HepG2 (cell line): ENCODE measurements at regions of chr10 and their contacts with region 1.

Region 1: GRCh38 chr10:61869774-61870525 is 31.5 kb upstream of the ARID5B start:
- DNase-seq: no peak
- ATAC-seq: no peak
- H3K4me3 ChIP-seq: no peak overlapping the region
- H3K27ac ChIP-seq: no peak overlapping the region
- H3K4me1 ChIP-seq: peaks cover 14% of the 10 kb centered on the region
- H3K27me3 ChIP-seq: no peaks in the 10 kb centered on the region; a peak in 2 of 5 replicates
- CTCF ChIP-seq: no peak
- EP300 ChIP-seq: no peak
- POLR2A ChIP-seq: no peak
- RAD21 ChIP-seq: no peak

Region 2: GRCh38 chr10:61175316-61175715 is 694.6 kb before region 1 on chr10:
- CTCF ChIA-PET with region 1: no interaction called
- POLR2A ChIA-PET with region 1: no interaction called
- in situ Hi-C with region 1: no loop called
- intact Hi-C with region 1: no loop called
- DNase-seq: no peak
- ATAC-seq: no peak
- H3K4me3 ChIP-seq: no peak overlapping the region
- H3K27ac ChIP-seq: no peak overlapping the region
- H3K4me1 ChIP-seq: peaks cover 24% of the 10 kb centered on the region
- H3K27me3 ChIP-seq: peaks cover 1 to 3% of the 10 kb centered on the region in 2 experiments; a peak in 1 of 5 replicates
- CTCF ChIP-seq: no peak
- EP300 ChIP-seq: no peak
- POLR2A ChIP-seq: no peak
- RAD21 ChIP-seq: no peak

Region 3: GRCh38 chr10:61883374-61884025 is 13.6 kb after region 1 on chr10:
- CTCF ChIA-PET with region 1: no interaction called
- POLR2A ChIA-PET with region 1: no interaction called
- in situ Hi-C with region 1: no loop called
- intact Hi-C with region 1: loop called (anchors 2 kb)
- DNase-seq: no peak
- ATAC-seq: no peak
- H3K4me3 ChIP-seq: no peak overlapping the region
- H3K27ac ChIP-seq: no peak overlapping the region
- H3K4me1 ChIP-seq: peaks cover 9% of the 10 kb centered on the region; the same call in 1 of the 2 replicates
- H3K27me3 ChIP-seq: no peaks in the 10 kb centered on the region; a peak in 1 of 5 replicates
- CTCF ChIP-seq: no peak
- EP300 ChIP-seq: no peak
- POLR2A ChIP-seq: no peak
- RAD21 ChIP-seq: no peak

Region 4: DNA sequence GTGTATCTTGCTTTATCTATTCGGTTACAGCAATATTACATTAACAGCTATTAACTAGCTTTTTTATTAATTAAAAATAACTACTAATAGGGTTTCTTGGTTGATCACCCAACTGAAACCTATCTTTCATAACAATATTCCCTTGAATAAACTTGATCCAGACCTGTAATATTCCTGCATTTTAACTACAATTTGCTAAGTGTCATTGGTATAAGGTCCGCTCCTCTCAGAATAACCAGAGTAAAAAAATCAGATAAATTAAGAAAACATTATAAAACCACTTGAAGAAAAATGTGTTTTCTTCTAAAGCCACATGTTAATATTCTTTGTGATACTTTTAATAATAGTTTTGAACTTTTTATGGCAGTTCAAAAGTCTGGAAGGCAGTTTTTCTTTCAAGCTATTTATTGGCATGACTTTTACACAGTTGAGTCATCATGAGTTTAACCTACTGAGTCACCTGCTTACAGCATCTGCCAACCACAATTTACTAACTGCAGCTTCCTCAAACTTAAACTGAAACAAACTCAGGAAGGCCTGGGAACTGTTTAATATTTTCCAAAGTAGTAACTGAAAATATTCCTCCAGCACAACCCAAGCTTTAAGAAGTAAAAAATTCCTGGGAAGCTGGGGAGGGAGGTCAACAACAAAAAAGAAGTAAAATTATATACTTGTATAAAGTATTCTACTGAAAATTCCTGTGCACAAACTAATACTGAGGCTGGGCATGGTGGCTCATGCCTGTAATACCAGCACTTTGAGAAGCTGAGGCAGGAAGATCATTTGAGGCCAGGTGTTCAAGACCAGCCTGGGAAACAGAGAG is 1366.4 kb after region 1 on chr10:
- CTCF ChIA-PET with region 1: no interaction called
- POLR2A ChIA-PET with region 1: no interaction called
- in situ Hi-C with region 1: no loop called
- intact Hi-C with region 1: no loop called
- DNase-seq: peak; percentile 44
- ATAC-seq: peak; percentile 69
- H3K4me3 ChIP-seq: no peak overlapping the region
- H3K27ac ChIP-seq: peak overlapping the region; percentile 26
- H3K4me1 ChIP-seq: peaks cover 11% of the 10 kb centered on the region; the same call in 1 of the 2 replicates
- H3K27me3 ChIP-seq: no peaks in the 10 kb centered on the region
- CTCF ChIP-seq: no peak
- EP300 ChIP-seq: no peak
- POLR2A ChIP-seq: no peak
- RAD21 ChIP-seq: no peak